PC-9 (cell line): ENCODE measurements at regions of chr7 and their contacts with region 1.

Region 1: DNA sequence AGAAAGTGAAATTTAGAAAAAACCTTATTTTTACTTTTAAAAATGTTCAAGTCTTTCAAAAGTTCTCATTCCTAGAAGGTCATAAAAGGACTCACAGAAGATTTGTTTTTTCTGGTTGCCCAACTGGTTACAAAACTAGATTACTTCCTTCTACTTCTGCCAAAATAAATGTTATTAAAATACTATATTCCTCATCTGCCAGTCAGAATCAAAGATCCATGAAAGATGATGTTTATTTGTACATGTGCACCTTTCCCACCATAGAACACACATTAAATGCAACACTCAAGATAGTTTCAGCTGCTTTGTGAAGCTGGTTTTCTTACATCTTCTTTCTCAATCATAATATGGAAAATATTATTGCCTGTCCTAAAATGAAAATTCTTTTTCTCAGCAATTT is 465.4 kb downstream of the ETV1 start:
- DNase-seq: no peak
- H3K4me3 ChIP-seq: no peak overlapping the region
- H3K27ac ChIP-seq: no peak overlapping the region
- H3K4me1 ChIP-seq: no peaks in the 10 kb centered on the region
- H3K27me3 ChIP-seq: no peaks in the 10 kb centered on the region
- CTCF ChIP-seq: no peak

Region 2: DNA sequence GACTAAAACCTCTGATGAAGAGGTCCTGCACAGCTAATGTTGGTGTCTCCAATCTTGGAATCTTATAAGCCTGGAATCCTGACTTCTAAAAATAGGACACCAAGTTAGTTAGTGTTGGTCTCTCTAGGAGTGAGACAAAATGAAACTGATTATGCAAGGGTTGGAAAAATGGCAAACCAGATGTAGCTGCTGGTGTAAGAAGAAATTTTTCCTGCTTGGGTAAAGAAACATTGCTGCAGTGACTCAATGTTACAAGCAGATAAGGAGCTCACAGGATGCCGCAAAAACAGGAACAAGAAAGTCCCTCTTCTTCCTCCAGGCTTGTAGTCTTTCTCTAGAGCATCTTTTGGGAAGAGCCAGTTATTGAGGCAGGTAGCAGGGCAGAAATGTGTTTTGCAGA is 16.4 kb after region 1 on chr7:
- CTCF ChIA-PET with region 1: no interaction called
- POLR2A ChIA-PET with region 1: no interaction called
- intact Hi-C with region 1: no loop called
- DNase-seq: no peak
- H3K4me3 ChIP-seq: no peak overlapping the region
- H3K27ac ChIP-seq: no peak overlapping the region
- H3K4me1 ChIP-seq: no peaks in the 10 kb centered on the region
- H3K27me3 ChIP-seq: no peaks in the 10 kb centered on the region
- CTCF ChIP-seq: no peak

Region 3: GRCh38 chr7:13708675-13709074 is 184.6 kb after region 1 on chr7:
- CTCF ChIA-PET with region 1: no interaction called
- POLR2A ChIA-PET with region 1: no interaction called
- intact Hi-C with region 1: no loop called
- DNase-seq: no peak
- H3K4me3 ChIP-seq: no peak overlapping the region
- H3K27ac ChIP-seq: no peak overlapping the region
- H3K4me1 ChIP-seq: no peaks in the 10 kb centered on the region
- H3K27me3 ChIP-seq: no peaks in the 10 kb centered on the region
- CTCF ChIP-seq: no peak

Region 4: DNA sequence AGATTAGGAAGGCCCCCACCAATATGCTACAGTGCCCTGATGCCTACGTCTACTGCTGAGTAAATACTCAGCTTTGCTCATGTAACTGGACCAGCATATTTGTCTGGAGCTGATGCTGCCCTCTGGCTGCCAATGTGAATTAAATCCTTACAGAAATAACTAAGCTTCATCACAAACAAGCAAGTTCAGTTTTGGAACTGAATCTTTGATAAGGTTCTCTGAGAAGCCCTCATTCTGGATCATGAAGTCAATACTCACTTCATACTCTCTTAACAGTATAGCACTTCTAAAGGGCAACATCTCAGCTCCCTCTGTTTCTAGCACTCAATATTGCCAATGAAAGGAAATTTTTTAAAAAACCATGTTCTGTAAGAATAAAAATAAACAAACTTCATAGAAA is 218.7 kb after region 1 on chr7:
- CTCF ChIA-PET with region 1: no interaction called
- POLR2A ChIA-PET with region 1: no interaction called
- intact Hi-C with region 1: loop called (anchors 2 kb)
- DNase-seq: peak in 1 of 2 experiments; percentile 23
- H3K4me3 ChIP-seq: no peak overlapping the region
- H3K27ac ChIP-seq: no peak overlapping the region
- H3K4me1 ChIP-seq: no peaks in the 10 kb centered on the region
- H3K27me3 ChIP-seq: no peaks in the 10 kb centered on the region
- CTCF ChIP-seq: peak; percentile 64; the same call in 1 of the 2 replicates

Region 5: DNA sequence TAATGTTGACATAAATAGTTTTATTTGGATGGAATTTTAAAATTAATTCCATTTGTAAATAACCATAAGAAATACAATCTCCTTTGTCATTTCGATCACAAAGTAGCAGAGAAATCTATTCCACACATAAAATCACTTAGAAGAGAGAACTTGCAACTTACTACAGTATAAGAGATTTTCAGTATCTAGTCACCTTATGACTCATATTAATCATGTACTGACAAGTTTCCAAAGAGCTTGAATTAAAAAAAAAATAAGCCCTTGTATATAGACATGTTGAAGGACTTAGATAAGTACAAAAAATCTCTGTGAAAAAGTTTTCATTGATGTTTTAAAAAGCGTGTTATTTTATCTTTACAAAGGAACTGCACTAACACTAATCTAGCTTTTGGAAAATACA is 672.5 kb after region 1 on chr7:
- CTCF ChIA-PET with region 1: no interaction called
- POLR2A ChIA-PET with region 1: interaction called, 10 read pairs
- intact Hi-C with region 1: no loop called
- DNase-seq: no peak
- H3K4me3 ChIP-seq: no peak overlapping the region
- H3K27ac ChIP-seq: no peak overlapping the region
- H3K4me1 ChIP-seq: no peaks in the 10 kb centered on the region
- H3K27me3 ChIP-seq: no peaks in the 10 kb centered on the region
- CTCF ChIP-seq: no peak

Region 6: GRCh38 chr7:14457568-14458453 is 933.7 kb after region 1 on chr7:
- CTCF ChIA-PET with region 1: no interaction called
- POLR2A ChIA-PET with region 1: no interaction called
- intact Hi-C with region 1: loop called (anchors 2 kb)
- DNase-seq: peak; percentile 66 to 68
- H3K4me3 ChIP-seq: peak overlapping the region; percentile 6; the same call in 1 of the 2 replicates
- H3K27ac ChIP-seq: no peak overlapping the region
- H3K4me1 ChIP-seq: no peaks in the 10 kb centered on the region
- H3K27me3 ChIP-seq: no peaks in the 10 kb centered on the region
- CTCF ChIP-seq: peak; percentile 98

Region 7: GRCh38 chr7:14691597-14692203 is 1167.6 kb after region 1 on chr7:
- CTCF ChIA-PET with region 1: no interaction called
- POLR2A ChIA-PET with region 1: no interaction called
- intact Hi-C with region 1: loop called (anchors 2 kb)
- DNase-seq: peak in 1 of 2 experiments; percentile 33
- H3K4me3 ChIP-seq: no peak overlapping the region
- H3K27ac ChIP-seq: no peak overlapping the region
- H3K4me1 ChIP-seq: no peaks in the 10 kb centered on the region
- H3K27me3 ChIP-seq: no peaks in the 10 kb centered on the region
- CTCF ChIP-seq: peak; percentile 100